ENCODE measurements at regions of chr5 and their contacts with region 1.

Region 1: DNA sequence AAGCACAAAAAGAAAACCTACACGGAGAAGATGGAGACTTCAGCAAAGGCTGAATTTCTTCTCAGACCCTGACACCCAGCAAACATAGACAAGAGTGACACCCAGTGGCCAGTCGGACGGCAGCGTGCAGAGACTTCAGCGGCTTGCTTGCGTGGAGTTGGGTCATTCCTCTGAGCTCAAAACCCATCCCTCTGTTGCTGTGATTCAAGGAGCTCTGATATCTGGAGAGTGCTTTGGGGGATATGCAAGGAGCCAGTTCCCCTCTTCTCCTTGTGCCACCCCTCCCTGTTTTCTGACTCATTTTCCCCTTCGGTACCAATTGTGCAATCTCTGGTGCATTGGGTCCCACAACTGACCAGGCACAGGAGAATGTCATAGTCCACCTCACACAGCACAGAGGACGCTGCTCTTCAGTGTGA is 27.5 kb downstream of the SH3TC2 start:
- DNase-seq: peak; percentile 84
- ATAC-seq: peak; percentile 92
- H3K4me3 Mint-ChIP-seq: no peak overlapping the region
- H3K27ac Mint-ChIP-seq: no peak overlapping the region
- H3K4me1 Mint-ChIP-seq: peaks cover 23% of the 10 kb centered on the region
- H3K27me3 Mint-ChIP-seq: peaks cover 11% of the 10 kb centered on the region

Region 2: GRCh38 chr5:148740966-148741742 is 294.2 kb before region 1 on chr5:
- CTCF ChIA-PET with region 1: interaction called, 91 read pairs
- DNase-seq: no peak
- ATAC-seq: no peak
- H3K4me3 Mint-ChIP-seq: no peak overlapping the region
- H3K27ac Mint-ChIP-seq: no peak overlapping the region
- H3K4me1 Mint-ChIP-seq: peaks cover 3% of the 10 kb centered on the region
- H3K27me3 Mint-ChIP-seq: peaks cover 36% of the 10 kb centered on the region

Region 3: GRCh38 chr5:148820461-148821395 is 214.7 kb before region 1 on chr5:
- CTCF ChIA-PET with region 1: interaction called, 10 read pairs
- DNase-seq: no peak
- ATAC-seq: peak; percentile 54
- H3K4me3 Mint-ChIP-seq: no peak overlapping the region
- H3K27ac Mint-ChIP-seq: no peak overlapping the region
- H3K4me1 Mint-ChIP-seq: peaks cover 8% of the 10 kb centered on the region
- H3K27me3 Mint-ChIP-seq: peaks cover 28% of the 10 kb centered on the region

Region 4: GRCh38 chr5:148912714-148913398 is 122.5 kb before region 1 on chr5:
- CTCF ChIA-PET with region 1: no interaction called
- DNase-seq: no peak
- ATAC-seq: no peak
- H3K4me3 Mint-ChIP-seq: no peak overlapping the region
- H3K27ac Mint-ChIP-seq: no peak overlapping the region
- H3K4me1 Mint-ChIP-seq: peaks cover 8% of the 10 kb centered on the region
- H3K27me3 Mint-ChIP-seq: peaks cover 2% of the 10 kb centered on the region

Region 5: DNA sequence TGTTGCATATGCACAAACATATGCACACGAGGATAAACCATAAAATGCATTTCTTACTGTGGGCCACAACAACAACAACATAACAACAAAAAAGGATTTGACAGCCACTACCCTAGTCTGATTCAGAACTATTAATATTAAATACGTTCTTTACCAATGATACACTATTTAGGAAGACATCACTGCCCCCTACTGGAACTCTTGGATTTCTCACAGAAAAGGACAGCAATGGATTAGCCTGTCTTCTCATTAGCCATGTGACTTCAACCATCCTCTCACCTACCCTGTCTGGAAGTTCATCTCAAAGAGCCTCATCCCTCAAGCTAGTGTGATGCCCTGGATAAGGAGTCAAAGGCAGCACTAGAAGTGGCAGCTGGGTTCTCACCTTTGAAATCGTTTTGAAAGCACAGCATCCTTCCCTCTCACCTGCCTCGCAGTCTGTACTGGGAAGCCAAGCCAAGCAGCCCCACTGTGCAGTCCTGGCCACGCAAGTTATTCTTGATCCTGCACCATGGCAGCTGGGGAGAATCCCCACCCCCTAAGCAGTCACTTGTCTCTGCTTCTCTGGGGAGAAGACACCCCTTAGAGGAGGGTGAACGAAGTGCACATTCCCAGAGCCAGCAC is 37.1 kb before region 1 on chr5:
- CTCF ChIA-PET with region 1: interaction called, 12 read pairs
- DNase-seq: peak; percentile 49
- ATAC-seq: peak; percentile 69
- H3K4me3 Mint-ChIP-seq: no peak overlapping the region
- H3K27ac Mint-ChIP-seq: no peak overlapping the region
- H3K4me1 Mint-ChIP-seq: no peaks in the 10 kb centered on the region
- H3K27me3 Mint-ChIP-seq: peaks cover 37% of the 10 kb centered on the region

Region 6: GRCh38 chr5:149005077-149005892 is 30.1 kb before region 1 on chr5:
- CTCF ChIA-PET with region 1: interaction called, 12 read pairs
- DNase-seq: no peak
- ATAC-seq: no peak
- H3K4me3 Mint-ChIP-seq: no peak overlapping the region
- H3K27ac Mint-ChIP-seq: no peak overlapping the region
- H3K4me1 Mint-ChIP-seq: no peaks in the 10 kb centered on the region
- H3K27me3 Mint-ChIP-seq: peaks cover 18% of the 10 kb centered on the region

Region 7: DNA sequence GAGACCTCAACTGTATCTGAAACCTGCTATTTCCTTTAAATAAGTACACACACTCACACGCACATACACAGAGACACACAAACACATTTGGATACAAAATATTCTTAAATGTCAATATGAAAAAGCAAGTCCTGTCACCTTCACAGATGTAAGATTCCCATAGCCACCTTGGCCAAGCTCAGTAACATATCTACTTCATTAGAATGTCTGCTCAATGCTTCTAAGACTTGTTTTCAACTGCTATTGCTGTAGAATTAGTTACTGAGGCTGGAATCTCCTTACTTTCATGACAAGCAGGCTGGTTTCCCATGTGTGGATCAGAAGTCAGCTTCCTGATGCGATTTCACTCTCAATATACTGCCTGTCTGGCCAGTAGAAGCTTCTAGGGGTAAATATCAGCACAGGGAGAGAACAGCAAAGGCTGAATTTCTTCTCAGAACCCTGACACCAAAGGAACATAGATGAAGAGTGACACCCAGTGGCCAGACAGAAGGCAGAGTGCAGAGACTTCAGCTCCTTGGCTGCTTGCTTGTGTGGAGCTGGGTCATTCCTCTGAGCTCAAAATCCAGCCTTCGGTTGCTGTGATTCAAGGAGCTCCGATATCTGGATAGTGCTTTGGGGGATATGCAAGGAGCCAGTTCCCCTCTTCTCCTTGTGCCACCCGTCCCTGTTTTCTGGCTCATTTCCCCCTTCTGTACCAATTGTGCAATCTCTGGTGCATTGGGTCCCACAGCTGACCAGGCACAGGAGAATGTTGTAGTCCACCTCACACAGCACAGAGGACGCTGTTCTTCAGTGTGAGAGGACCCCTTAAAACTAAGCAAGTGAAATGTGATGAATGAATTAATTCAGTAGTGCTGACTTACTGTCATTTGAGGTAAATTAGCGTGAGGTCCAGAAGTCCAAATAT is 79.3 kb after region 1 on chr5:
- CTCF ChIA-PET with region 1: interaction called, 18 read pairs
- DNase-seq: peak; percentile 61
- ATAC-seq: peak; percentile 86
- H3K4me3 Mint-ChIP-seq: no peak overlapping the region
- H3K27ac Mint-ChIP-seq: no peak overlapping the region
- H3K4me1 Mint-ChIP-seq: peaks cover 11% of the 10 kb centered on the region
- H3K27me3 Mint-ChIP-seq: peaks cover 46% of the 10 kb centered on the region

Measured in activated CD8-positive, alpha-beta memory T cell treated with anti-CD3 and anti-CD28 coated beads, Interleukin-2, amount 10 ng/mL, durations not matched to agents 7 days and 5 days (primary cell).